BJ (cell line): ENCODE measurements at regions of chr16 and their contacts with region 1.

Region 1: GRCh38 chr16:67521095-67521804 is 7.4 kb upstream of the RIPOR1 start:
- DNase-seq: peak; percentile 59
- H3K4me3 ChIP-seq: peak overlapping the region; percentile 45
- H3K27me3 ChIP-seq: no peaks in the 10 kb centered on the region
- CTCF ChIP-seq: peak; percentile 98

Region 2: DNA sequence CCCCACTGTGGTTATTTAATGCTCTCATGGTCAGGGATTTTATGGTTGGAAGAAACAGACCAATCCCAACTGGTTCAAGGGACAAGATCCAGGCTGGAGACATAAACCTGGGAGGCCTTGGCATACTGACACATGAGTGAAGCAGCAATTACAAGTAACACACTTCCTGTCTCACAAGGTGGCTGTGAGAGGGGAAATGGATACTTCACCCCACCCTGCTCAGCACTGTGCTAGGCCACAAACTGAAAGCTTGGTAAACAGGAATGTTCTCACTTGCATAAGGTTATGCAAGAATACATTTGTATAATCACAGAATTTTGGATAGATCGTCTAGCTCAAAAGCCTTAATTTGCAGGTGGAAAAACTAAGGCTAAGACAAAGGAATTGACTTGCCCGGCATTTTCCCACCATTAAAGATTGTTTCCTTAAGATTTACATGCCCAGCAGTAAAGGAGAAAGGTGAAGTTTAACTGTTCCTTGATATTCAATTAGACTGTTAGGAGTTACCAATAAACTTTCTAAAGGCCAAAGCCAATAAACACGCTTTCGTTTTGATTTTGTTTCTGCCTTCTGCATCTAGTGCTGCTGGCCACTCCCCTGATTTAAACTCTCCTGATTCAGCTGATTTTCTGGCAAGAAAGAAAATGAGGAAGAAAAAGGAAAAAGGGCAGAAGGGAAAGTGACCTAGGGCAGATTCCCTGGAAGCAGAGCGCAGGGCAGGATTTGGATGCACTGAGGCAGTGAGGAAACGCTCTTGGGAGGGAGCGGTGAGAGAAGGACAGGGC is 1370.4 kb before region 1 on chr16:
- CTCF ChIA-PET with region 1: no interaction called
- POLR2A ChIA-PET with region 1: no interaction called
- DNase-seq: no peak
- H3K4me3 ChIP-seq: no peak overlapping the region
- H3K27me3 ChIP-seq: no peaks in the 10 kb centered on the region
- CTCF ChIP-seq: no peak

Region 3: GRCh38 chr16:67378642-67379041 is 142.6 kb before region 1 on chr16:
- CTCF ChIA-PET with region 1: no interaction called
- POLR2A ChIA-PET with region 1: no interaction called
- DNase-seq: no peak
- H3K4me3 ChIP-seq: no peak overlapping the region
- H3K27me3 ChIP-seq: peaks cover 3% of the 10 kb centered on the region
- CTCF ChIP-seq: no peak

Region 4: DNA sequence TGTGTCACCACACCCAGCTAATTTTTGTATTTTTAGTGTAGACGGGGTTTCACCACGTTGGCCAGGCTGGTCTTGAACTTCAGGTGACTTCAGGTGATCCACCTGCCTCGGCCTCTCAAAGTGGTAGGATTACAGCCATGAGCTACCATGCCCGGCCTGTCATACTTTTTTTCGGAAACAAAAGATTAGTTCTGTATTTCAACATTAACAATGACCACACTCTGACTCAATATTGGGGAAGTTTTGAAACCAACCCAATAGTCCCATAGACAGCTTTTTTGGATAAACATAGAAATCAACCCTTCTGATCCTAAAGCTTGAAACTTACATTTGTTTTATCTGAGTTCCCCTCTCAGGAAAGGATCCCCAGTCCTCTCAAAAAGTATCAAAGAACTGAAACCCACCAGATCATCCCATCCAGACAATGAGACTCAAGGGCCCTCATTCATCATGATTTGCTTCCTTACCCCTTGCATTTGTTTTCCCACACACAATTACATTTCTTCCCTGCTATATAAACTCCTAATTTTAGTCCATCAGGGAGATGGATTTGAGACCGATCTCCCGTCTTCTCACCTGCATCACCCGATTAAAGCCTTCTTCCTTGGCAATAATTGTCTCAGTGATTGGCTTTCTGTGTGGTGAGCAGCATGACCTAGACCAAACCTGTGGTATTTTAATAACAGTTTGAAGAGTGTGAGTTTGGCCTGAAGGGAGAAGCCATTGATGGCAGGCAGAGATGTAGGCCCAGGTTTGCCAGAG is 30.7 kb before region 1 on chr16:
- CTCF ChIA-PET with region 1: interaction called, 80 read pairs
- POLR2A ChIA-PET with region 1: no interaction called
- DNase-seq: no peak
- H3K4me3 ChIP-seq: no peak overlapping the region
- H3K27me3 ChIP-seq: no peaks in the 10 kb centered on the region
- CTCF ChIP-seq: no peak

Region 5: GRCh38 chr16:67537270-67537635 is 16.0 kb after region 1 on chr16:
- CTCF ChIA-PET with region 1: interaction called, 29 read pairs
- POLR2A ChIA-PET with region 1: no interaction called
- DNase-seq: no peak
- H3K4me3 ChIP-seq: peak overlapping the region; percentile 81
- H3K27me3 ChIP-seq: no peaks in the 10 kb centered on the region
- CTCF ChIP-seq: no peak

Region 6: GRCh38 chr16:67561824-67562525 is 40.7 kb after region 1 on chr16:
- CTCF ChIA-PET with region 1: interaction called, 35 read pairs
- POLR2A ChIA-PET with region 1: no interaction called
- DNase-seq: peak; percentile 86
- H3K4me3 ChIP-seq: peak overlapping the region; percentile 67
- H3K27me3 ChIP-seq: no peaks in the 10 kb centered on the region
- CTCF ChIP-seq: no peak

Region 7: DNA sequence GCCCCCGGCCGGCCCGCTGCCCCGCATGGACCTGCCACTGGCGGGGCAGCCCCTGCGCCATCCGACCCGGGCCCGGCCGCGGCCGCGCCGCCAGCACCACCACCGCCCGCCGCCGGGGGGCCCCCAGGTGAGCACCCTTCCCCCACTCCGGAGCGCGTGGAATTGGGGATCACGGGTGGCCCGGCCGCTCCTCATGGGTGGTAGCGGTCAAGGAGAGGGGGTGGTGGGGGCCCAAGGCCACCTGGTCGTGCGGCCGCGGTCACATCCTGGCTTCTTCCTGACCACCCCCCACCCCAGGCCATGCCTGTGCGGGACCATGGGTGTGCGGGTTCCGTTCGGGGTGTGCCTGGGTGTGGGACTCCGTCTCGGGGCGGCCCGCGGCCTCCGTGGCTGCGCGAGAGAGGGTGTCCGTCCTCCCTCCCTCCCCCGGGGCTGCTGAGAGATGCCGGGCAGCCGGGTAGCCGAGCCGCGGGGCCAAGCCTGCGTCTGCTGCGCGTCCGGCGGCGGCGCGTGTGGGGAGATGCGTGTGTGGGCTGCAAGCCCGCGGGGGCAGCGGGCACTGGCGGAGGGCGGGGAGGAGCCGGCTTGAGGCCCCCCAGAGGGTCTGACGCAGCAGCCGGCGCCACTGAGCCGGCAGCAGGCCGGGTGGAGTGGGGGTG is 132.0 kb after region 1 on chr16:
- CTCF ChIA-PET with region 1: interaction called, 181 read pairs
- POLR2A ChIA-PET with region 1: no interaction called
- DNase-seq: no peak
- H3K4me3 ChIP-seq: peak overlapping the region; percentile 44
- H3K27me3 ChIP-seq: peaks cover 26% of the 10 kb centered on the region
- CTCF ChIP-seq: peak; percentile 23; the same call in 1 of the 2 replicates

Region 8: DNA sequence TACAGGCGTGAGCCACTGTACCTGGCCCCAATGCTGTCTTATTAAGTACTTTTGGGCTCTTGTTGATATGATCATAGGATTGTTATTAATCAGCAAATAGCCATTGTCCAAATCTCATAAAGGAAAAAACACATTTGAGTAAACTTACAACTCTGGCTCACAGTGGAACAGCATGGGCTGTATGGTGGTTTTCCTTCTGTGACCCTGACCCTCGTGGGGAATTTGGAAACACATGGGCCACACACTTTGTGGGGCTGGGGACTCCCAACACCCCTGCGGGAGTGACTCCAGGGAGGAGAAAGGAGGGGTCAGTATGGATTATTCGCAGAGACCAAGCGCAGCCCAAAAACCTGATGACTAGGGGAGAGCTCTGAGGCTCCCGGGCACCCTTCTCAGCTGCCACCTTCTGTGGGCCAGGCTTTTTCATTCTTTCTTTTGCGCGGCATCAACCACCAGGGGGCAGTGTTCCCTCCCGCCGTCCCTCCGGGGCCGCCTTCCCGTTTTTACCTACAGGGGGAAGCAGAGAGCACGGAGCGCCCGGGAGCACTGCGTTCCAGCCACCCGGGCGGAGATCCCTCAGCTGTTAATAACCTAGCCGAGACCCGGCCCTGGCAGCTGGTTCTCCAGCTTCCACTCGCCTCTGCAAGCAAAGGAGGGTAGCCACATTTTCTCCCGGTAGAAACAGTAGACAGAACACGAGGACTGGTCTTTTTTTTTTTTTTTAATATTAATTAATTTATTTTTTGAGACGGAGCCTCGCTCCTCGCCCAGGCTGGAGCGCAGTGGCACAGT is 295.2 kb after region 1 on chr16:
- CTCF ChIA-PET with region 1: interaction called, 15 read pairs
- POLR2A ChIA-PET with region 1: no interaction called
- DNase-seq: no peak
- H3K4me3 ChIP-seq: no peak overlapping the region
- H3K27me3 ChIP-seq: no peaks in the 10 kb centered on the region
- CTCF ChIP-seq: peak; percentile 100